ENCODE measurements at regions of chr13 and their contacts with region 1.

Region 1: GRCh38 chr13:26482451-26483197 is 74.9 kb upstream of the WASF3 start:
- DNase-seq: no peak
- H3K4me3 ChIP-seq: no peak overlapping the region
- H3K27ac ChIP-seq: no peak overlapping the region
- H3K4me1 ChIP-seq: peaks cover 7% of the 10 kb centered on the region
- H3K27me3 ChIP-seq: no peaks in the 10 kb centered on the region
- CTCF ChIP-seq: peak; percentile 89

Region 2: GRCh38 chr13:26698392-26699196 is 216.0 kb after region 1 on chr13:
- intact Hi-C with region 1: loop called (anchors 10 kb)
- DNase-seq: peak; percentile 79
- H3K4me3 ChIP-seq: peak overlapping the region; percentile 39
- H3K27ac ChIP-seq: no peak overlapping the region
- H3K4me1 ChIP-seq: peaks cover 13% of the 10 kb centered on the region
- H3K27me3 ChIP-seq: peaks cover 3% of the 10 kb centered on the region
- CTCF ChIP-seq: peak; percentile 98

Region 3: DNA sequence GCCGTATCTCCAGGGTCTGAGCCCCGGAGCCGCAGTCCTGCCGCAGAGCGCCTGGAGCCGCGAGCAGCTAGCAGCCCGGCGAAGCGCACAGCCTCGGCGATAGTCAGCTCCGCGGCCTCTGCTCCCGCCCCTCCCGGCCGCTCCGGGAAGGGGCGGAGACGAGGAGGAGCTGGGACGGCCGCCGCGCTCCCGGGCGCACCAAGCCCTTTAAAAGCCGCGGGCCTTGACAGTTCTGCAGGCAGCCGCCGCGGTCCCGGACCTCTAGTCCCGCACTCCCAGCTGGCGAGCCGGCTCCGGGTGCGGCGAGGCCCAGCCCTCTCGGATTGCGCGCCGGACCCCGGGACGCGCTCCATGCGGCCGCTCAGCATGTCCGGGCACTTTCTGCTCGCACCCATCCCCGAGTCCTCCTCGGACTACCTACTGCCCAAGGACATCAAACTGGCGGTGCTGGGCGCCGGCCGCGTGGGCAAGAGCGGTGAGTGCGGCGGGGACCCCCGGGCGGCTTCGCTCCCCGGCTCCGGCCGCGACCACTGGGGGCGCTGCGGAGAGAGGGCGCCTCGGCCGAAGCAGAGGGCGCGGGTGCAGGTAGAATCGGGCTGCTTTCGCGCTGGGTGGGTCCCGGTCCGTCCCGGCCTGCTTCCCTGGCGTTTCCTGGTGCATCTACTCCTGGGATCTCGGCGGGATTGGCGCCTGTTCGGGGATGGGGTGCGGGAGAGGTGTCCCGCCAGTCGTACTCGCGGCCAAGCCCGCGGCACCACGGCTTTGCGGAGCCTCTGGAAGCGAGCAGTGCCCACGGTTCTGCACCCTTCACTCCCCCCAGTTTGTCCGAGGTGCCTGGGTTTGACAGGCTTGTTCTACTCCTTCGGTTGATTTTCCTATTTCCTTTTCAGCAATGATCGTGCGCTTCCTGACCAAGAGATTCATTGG is 788.2 kb after region 1 on chr13 and contains the start of gene RASL11A:
- intact Hi-C with region 1: no loop called
- DNase-seq: peak; percentile 88
- H3K4me3 ChIP-seq: peak within 1 kb of the TSS; percentile 81
- H3K27ac ChIP-seq: peak within 1 kb of the TSS; percentile 93
- H3K4me1 ChIP-seq: peaks cover 51% of the 10 kb centered on the region
- H3K27me3 ChIP-seq: no peaks in the 10 kb centered on the region
- CTCF ChIP-seq: peak; percentile 97
- total RNA-seq, gene RASL11A: 5.3 TPM

Measured in left ventricle myocardium inferior (tissue), 1 donor.